HCT116 (cell line): ENCODE measurements at regions of chr7 and their contacts with region 1.

Region 1: GRCh38 chr7:31096877-31097258 is 44.8 kb downstream of the ADCYAP1R1 start:
- DNase-seq: no peak
- ATAC-seq: no peak
- H3K4me3 ChIP-seq: no peak overlapping the region
- H3K27ac ChIP-seq: no peak overlapping the region
- H3K4me1 ChIP-seq: no peaks in the 10 kb centered on the region
- H3K27me3 ChIP-seq: peaks cover 71% of the 10 kb centered on the region
- CTCF ChIP-seq: no peak
- POLR2A ChIP-seq: no peak
- RAD21 ChIP-seq: no peak

Region 2: DNA sequence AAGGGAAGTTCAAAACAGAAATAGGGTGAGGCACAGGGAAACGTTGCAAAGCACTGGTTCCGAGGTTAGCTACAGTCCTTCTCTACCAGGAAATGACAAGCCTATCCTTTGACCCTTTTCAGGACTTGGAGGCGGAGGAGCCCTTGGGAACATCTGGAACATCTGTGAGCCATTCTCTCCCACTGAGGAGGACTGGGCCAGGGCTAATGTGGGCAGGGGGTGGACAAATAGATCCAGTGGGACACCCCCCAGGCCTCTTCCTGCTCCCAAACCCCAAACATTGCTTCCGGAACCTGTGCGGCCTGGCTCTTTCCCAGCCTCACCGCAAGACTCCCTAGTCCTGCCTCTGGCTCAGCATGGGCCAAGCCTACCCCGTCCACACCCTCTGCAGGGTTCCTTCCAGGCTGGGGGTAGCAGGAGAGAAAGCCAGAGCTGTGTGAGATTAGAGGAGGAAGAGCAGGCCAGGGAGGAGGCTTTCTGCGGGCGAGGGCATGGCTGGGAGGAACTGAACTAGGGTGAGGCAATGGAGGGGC is 96.6 kb before region 1 on chr7:
- CTCF ChIA-PET with region 1: no interaction called
- POLR2A ChIA-PET with region 1: no interaction called
- RAD21 ChIA-PET with region 1: no interaction called
- intact Hi-C with region 1: loop called (anchors 10 kb)
- DNase-seq: no peak
- ATAC-seq: no peak
- H3K4me3 ChIP-seq: no peak overlapping the region
- H3K27ac ChIP-seq: no peak overlapping the region
- H3K4me1 ChIP-seq: no peaks in the 10 kb centered on the region
- H3K27me3 ChIP-seq: no peaks in the 10 kb centered on the region; the same call in 1 of the 2 replicates
- CTCF ChIP-seq: no peak
- POLR2A ChIP-seq: no peak
- RAD21 ChIP-seq: no peak

Region 3: GRCh38 chr7:31074120-31074383 is 22.8 kb before region 1 on chr7:
- CTCF ChIA-PET with region 1: no interaction called
- POLR2A ChIA-PET with region 1: no interaction called
- RAD21 ChIA-PET with region 1: no interaction called
- intact Hi-C with region 1: no loop called
- DNase-seq: no peak
- ATAC-seq: no peak
- H3K4me3 ChIP-seq: no peak overlapping the region
- H3K27ac ChIP-seq: no peak overlapping the region
- H3K4me1 ChIP-seq: no peaks in the 10 kb centered on the region
- H3K27me3 ChIP-seq: peaks cover 32% of the 10 kb centered on the region
- CTCF ChIP-seq: no peak
- POLR2A ChIP-seq: no peak
- RAD21 ChIP-seq: no peak

Region 4: GRCh38 chr7:31204071-31204470 is 107.2 kb after region 1 on chr7:
- CTCF ChIA-PET with region 1: no interaction called
- POLR2A ChIA-PET with region 1: no interaction called
- RAD21 ChIA-PET with region 1: no interaction called
- intact Hi-C with region 1: no loop called
- DNase-seq: no peak
- ATAC-seq: no peak
- H3K4me3 ChIP-seq: no peak overlapping the region
- H3K27ac ChIP-seq: no peak overlapping the region
- H3K4me1 ChIP-seq: no peaks in the 10 kb centered on the region
- H3K27me3 ChIP-seq: peaks cover 7% of the 10 kb centered on the region; the same call in 1 of the 2 replicates
- CTCF ChIP-seq: no peak
- POLR2A ChIP-seq: no peak
- RAD21 ChIP-seq: no peak